OCI-LY7 (cell line): ENCODE measurements at regions of chr2 and their contacts with region 1.

Region 1: DNA sequence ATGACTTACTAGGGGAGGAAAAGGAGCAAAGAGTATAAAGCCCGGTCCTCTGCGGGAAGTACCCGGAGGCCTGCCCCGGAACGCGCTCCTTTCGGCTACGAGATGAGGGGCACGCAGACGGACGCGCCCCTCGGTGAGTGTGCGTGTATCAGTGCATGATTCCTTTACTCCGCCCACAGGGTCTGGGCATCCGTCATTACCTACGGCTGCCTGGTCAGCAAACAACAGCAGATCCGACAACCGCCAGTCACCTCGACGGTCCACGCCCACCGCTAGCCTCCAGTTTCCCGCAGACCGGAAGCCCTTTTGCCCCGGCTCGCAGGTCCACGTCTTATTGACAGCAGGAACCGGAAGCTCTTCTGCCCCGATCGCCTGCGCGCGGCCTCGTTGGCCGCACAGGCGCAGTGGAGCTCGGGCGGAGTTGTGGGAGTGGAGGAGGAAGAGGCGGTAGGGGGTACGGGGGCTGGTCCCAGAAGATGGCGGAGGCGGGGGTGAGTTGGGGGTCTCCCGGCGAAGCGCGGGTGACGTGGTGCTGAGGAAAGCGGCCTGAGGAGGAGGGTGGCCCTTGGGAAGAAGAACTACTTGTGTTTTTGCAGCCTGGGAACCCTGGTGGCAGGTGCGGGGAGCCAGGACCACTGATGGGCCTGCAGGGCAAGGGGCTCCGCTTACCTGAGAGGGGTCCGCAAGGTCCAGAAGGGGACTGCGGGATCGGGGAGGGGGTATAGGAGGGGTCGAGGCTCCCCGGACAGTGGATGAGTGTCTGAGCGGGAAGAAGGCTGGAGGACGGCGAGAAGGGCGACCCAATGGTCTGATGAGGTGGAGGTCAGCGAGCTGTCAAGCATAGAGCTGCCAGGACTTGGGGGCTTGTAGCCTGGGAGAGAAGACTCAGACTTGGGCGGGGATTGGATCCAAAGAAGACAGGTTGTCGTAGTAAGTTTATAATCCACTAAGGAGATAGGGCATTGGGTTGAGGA is at the start of gene INSIG2:
- DNase-seq: peak; percentile 94
- H3K4me3 ChIP-seq: peak within 1 kb of the TSS; percentile 92
- H3K27ac ChIP-seq: no peak within 1 kb of the TSS
- H3K4me1 ChIP-seq: peaks cover 16% of the 10 kb centered on the region
- CTCF ChIP-seq: no peak
- total RNA-seq, gene INSIG2: 3.4 and 5.9 TPM in 2 replicates

Region 2: DNA sequence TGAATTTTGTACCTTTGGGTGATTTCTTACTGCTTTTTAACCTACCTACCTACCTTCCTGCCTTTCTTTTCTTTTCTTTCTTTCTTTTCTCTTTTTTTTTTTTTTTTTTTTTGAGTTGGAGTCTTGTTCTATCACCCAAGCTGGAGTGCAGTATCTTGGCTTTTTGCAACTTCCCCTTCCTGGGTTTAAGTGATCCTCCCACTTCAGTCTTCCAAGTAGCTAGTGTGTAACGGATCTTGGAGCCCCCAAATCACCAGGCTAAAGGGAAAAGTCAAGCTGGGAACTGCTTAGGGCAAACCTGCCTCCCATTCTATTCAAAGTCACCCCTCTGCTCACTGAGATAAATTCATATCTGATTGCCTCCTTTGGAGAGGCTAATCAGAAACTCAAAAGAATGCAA is 212.6 kb before region 1 on chr2:
- CTCF ChIA-PET with region 1: no interaction called
- POLR2A ChIA-PET with region 1: no interaction called
- intact Hi-C with region 1: no loop called
- DNase-seq: no peak
- H3K4me3 ChIP-seq: no peak overlapping the region
- H3K27ac ChIP-seq: no peak overlapping the region
- H3K4me1 ChIP-seq: no peaks in the 10 kb centered on the region
- CTCF ChIP-seq: no peak

Region 3: DNA sequence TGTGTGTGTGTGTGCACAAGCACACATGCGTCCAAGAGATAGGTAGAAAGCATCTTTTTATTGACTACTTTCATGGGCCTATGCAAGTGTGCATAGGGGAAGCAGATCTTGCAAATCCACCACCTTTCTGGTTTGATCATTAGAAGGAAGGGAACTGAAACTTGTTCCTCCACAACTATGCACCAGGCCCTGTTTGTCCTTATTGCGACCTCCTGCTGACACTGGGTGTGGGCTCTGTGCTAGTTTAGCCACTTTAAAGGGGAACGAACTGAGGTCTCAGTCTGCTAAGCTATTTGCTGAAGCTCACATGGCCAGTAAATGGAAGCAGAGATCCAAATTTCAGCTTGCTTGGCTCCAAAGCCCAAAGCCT is 32.2 kb before region 1 on chr2:
- CTCF ChIA-PET with region 1: no interaction called
- POLR2A ChIA-PET with region 1: interaction called, 22 read pairs
- intact Hi-C with region 1: no loop called
- DNase-seq: peak; percentile 91
- H3K4me3 ChIP-seq: peak overlapping the region; percentile 60
- H3K27ac ChIP-seq: peak overlapping the region; percentile 94
- H3K4me1 ChIP-seq: peaks cover 68% of the 10 kb centered on the region
- CTCF ChIP-seq: no peak